Ascending aorta (tissue), 2 donors: ENCODE measurements at regions of chr16 and their contacts with region 1.

Region 1: GRCh38 chr16:87203060-87203656 is 114.0 kb downstream of the C16orf95 start:
- DNase-seq: peak in 1 of 2 donors; percentile 80
- H3K4me3 ChIP-seq: no peak overlapping the region
- H3K27ac ChIP-seq: peak overlapping the region; percentile 52 to 69
- H3K4me1 ChIP-seq: peaks cover 5 to 34% of the 10 kb centered on the region in 2 donors
- H3K27me3 ChIP-seq: no peaks in the 10 kb centered on the region
- CTCF ChIP-seq: peak; percentile 71 to 91 (median 84)

Region 2: DNA sequence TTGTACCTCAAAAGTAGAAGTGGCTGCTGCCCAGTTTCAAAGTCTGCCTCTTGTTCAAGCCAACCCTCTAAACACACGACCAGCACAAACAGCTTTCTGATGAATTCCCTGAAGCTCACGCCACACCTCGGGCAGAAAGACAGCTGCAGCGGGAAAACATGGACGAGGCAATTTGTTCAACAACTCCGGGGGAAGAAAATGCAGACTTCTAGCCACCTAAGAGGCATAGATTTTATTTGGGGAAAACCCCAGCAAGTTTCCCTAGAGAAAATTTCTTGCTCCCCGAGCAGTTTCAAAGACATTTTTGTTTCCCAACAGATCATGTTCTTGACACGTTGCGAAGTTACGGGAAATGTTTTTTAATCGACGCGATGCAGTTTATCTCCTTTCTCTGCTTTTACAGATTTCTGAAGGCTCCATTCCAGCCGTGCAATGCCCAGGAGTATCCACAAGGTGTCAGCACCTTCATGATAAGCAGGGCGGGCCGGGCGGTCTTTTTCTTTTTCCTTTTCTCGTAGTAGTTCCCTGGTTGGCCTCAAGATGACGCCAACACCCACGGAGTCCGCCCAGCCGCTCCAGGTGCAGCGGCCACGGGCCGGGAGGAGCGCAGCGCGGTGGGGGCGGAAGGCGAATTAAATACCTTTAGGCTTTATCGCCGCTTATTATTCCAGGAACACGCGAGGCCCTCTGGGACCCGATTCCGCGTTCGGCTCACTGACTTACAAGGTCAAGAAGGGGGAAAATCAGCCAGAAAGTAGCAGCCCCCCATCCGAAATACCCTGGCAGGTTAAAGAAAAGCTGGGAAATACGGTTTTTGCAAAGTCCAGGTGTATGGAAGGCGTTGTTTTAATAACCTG is 639.4 kb before region 1 on chr16:
- intact Hi-C with region 1: loop called (anchors 2 kb)
- DNase-seq: peak; percentile 70 to 97
- H3K4me3 ChIP-seq: peak overlapping the region; percentile 76 to 79
- H3K27ac ChIP-seq: peak overlapping the region; percentile 91 to 98
- H3K4me1 ChIP-seq: peaks cover 0 to 4% of the 10 kb centered on the region in 2 donors
- H3K27me3 ChIP-seq: no peaks in the 10 kb centered on the region
- CTCF ChIP-seq: peak; percentile 100

Region 3: DNA sequence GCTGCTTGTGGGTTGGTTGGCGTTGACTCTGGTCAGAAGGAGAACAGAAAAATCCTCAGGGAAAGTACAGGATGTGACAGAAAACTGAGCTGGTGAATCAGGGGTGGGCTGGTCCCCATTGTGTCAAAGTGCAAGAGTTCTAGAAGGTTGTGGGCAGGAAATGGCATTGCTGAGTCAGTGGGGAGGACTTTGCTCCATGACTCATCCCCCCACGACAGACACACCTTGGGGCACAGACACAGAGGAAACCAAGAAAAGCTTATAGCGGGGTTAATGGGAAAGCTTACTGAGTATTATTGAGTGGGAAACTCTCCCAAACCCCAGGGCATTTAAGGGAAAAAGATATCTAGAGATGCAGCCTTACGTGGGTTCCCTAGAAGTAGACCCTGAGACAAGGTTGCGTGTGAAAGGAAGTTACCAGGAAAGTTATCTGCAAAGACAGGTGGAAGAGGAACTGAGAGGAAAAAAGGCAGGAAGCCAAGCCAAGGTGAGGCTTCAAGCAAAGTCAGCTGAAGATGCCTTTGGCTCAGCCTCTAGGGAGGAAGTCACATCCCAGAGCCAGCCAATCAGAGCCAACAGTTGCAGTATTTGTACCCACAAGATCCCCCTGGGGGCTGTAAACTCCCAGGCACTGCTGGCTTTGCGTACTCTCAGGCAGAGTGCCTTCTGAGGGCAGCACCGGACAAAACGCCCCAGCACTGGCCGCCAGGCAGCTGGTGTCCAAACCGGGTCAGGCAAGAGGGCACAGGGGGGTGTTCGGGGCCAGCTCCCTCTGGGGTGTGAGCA is 538.4 kb before region 1 on chr16:
- intact Hi-C with region 1: loop called (anchors 10 kb)
- DNase-seq: peak in 1 of 2 donors; percentile 90
- H3K4me3 ChIP-seq: no peak overlapping the region
- H3K27ac ChIP-seq: peak overlapping the region; percentile 74 to 75
- H3K4me1 ChIP-seq: peaks cover 9 to 35% of the 10 kb centered on the region in 2 donors
- H3K27me3 ChIP-seq: no peaks in the 10 kb centered on the region
- CTCF ChIP-seq: no peak

Region 4: GRCh38 chr16:87067836-87068761 is 135.1 kb before region 1 on chr16:
- intact Hi-C with region 1: loop called (anchors 5 kb)
- DNase-seq: no peak
- H3K4me3 ChIP-seq: peak overlapping the region in 1 of 2 donors; percentile 44
- H3K27ac ChIP-seq: peak overlapping the region; percentile 77 to 83
- H3K4me1 ChIP-seq: peaks cover 0 to 5% of the 10 kb centered on the region in 2 donors
- H3K27me3 ChIP-seq: no peaks in the 10 kb centered on the region
- CTCF ChIP-seq: no peak

Region 5: GRCh38 chr16:87127061-87127739 is 76.0 kb before region 1 on chr16:
- intact Hi-C with region 1: loop called (anchors 2 kb)
- DNase-seq: peak in 1 of 2 donors; percentile 73
- H3K4me3 ChIP-seq: peak overlapping the region in 1 of 2 donors; percentile 39
- H3K27ac ChIP-seq: peak overlapping the region; percentile 90 to 92
- H3K4me1 ChIP-seq: peaks cover 17 to 23% of the 10 kb centered on the region in 2 donors
- H3K27me3 ChIP-seq: no peaks in the 10 kb centered on the region
- CTCF ChIP-seq: peak in 1 of 3 experiments; percentile 9

Region 6: DNA sequence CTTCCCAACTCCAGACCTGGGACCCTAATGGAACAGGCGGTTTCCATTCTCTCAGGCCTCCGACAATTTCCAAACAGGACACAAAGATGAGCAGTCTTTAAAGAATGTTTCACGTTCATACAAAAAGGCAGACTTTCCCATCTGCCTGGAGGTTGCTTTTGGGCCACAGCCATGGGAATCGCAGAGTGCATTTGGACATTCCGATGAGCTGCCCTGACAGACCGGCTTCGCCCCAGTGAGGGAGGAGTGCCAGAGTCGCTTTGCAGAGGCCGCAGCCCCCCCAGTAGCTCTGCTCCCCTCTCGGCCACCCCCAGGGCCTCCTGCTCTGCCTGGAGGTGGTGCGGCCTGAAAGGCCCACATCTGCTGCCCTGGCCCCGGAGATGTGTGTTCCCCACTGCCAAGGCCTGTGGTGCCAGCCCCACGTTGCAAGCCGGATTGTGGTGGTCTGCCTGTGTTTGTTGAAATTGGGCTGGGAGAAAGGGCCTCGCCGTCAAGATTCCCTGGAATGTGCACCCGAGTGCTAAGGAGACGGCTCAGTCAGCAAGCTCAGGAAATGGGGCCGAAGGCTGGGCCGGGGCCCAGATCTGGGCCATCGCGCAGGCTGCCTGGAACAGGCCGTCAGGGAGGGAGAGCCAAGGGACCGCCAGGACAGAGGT is 24.3 kb after region 1 on chr16:
- intact Hi-C with region 1: loop called (anchors 2 kb)
- DNase-seq: peak in 1 of 2 donors; percentile 74
- H3K4me3 ChIP-seq: no peak overlapping the region
- H3K27ac ChIP-seq: peak overlapping the region; percentile 86 to 88
- H3K4me1 ChIP-seq: peaks cover 6 to 14% of the 10 kb centered on the region in 2 donors
- H3K27me3 ChIP-seq: no peaks in the 10 kb centered on the region
- CTCF ChIP-seq: no peak

Region 7: GRCh38 chr16:87278191-87279095 is 75.3 kb after region 1 on chr16:
- intact Hi-C with region 1: loop called (anchors 2 kb)
- DNase-seq: peak in 1 of 2 donors; percentile 88
- H3K4me3 ChIP-seq: no peak overlapping the region
- H3K27ac ChIP-seq: no peak overlapping the region
- H3K4me1 ChIP-seq: no peaks in the 10 kb centered on the region
- H3K27me3 ChIP-seq: no peaks in the 10 kb centered on the region
- CTCF ChIP-seq: peak; percentile 86 to 92 (median 89)